Dendritic cell treated with granulocyte-macrophage colony-stimulating factor and Interleukin-4, amounts not matched to agents 40 ng/mL and 50 ng/mL, for 4 days (primary cell): ENCODE measurements at regions of chr12 and their contacts with region 1.

Region 1: DNA sequence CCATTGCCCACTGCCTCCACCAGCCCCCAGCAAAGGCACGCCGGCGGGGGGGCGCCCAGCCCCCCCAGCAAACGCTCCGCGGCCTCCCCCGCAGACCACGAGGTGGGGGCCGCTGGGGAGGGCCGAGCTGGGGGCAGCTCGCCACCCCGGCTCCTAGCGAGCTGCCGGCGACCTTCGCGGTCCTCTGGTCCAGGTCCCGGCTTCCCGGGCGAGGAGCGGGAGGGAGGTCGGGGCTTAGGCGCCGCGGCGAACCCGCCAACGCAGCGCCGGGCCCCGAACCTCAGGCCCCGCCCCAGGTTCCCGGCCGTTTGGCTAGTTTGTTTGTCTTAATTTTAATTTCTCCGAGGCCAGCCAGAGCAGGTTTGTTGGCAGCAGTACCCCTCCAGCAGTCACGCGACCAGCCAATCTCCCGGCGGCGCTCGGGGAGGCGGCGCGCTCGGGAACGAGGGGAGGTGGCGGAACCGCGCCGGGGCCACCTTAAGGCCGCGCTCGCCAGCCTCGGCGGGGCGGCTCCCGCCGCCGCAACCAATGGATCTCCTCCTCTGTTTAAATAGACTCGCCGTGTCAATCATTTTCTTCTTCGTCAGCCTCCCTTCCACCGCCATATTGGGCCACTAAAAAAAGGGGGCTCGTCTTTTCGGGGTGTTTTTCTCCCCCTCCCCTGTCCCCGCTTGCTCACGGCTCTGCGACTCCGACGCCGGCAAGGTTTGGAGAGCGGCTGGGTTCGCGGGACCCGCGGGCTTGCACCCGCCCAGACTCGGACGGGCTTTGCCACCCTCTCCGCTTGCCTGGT is at the start of gene CDKN1B:
- H3K4me3 Mint-ChIP-seq: peak within 1 kb of the TSS; percentile 96
- H3K27ac Mint-ChIP-seq: peak within 1 kb of the TSS; percentile 100
- H3K4me1 Mint-ChIP-seq: peaks cover 46% of the 10 kb centered on the region
- H3K27me3 Mint-ChIP-seq: no peaks in the 10 kb centered on the region

Region 2: DNA sequence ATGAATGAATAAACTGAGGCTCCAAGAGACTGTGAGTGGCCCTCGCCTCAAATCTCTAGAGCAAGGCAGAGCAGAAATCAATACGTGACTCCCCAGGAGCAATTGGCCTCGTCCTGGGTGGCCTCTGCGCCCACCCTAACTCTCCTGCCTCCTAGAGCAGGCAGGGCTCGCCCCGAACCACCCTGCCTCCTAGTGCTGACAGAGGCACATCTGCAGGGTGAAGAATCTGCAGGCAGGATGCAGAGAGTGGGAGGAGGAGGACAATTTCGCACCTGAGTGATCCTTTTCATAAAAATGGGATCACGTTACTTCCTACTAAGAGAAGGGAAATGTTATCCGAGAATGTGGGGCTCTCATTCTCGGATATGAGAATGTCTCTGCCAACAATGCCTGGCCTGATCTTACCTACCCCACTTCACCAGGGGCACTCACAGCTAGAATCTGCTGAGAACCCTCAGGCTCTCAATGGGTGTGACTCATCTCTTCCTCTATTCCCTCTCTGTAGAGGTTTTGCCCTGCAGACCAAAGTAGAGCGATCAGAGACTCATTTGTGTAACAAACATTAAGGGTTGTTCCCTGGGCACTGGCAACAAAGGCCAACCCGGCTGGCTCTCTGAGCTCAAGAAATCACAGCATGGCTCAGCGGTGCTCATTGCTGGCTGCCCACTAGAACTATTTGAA is 707.9 kb before region 1 on chr12:
- intact Hi-C with region 1: loop called (anchors 10 kb)
- H3K4me3 Mint-ChIP-seq: peak overlapping the region; percentile 11
- H3K27ac Mint-ChIP-seq: peak overlapping the region; percentile 95
- H3K4me1 Mint-ChIP-seq: peaks cover 53% of the 10 kb centered on the region
- H3K27me3 Mint-ChIP-seq: peaks cover 6% of the 10 kb centered on the region

Region 3: DNA sequence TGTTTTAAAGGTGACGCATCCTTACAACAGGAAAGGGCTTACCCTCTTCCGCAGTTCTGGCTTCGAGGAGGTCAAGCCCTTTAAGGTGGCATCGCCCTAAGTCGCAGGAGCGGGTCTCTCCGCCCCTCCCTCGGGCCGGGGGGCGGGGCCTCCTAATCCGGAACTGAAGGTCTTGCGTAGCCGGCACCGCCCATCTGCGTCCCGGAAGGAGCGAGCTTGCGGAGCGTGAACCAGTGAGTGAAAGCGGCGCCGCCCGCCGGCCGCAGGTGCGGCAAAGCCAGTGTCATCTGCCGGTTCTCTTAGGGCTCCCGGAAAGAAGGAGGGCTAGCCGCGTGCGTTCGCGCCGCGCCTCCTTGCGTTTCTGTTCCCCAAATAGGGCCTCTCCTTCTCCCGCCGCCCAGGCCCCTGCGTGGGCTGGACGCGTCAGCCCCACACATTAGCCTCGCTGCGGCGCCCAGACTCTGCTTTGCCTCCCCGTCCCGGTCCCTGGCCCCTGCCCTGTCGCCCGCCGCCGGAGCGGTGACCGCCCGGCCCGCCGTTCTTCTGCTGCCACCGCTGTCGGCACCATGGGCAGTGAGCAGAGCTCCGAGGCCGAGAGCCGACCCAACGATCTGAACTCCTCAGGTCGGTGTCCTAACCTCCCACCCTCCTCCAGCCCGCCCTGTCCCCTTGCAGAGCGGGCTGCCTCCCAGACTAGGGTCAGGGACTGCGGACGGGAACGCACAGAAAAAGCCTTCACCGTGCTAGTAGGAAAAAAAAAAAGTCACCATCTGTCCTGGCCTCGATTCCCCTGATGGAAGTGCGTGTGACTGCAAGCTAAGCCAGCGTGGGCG is 359.9 kb before region 1 on chr12 and contains the start of gene BORCS5:
- intact Hi-C with region 1: loop called (anchors 2 kb)
- H3K4me3 Mint-ChIP-seq: peak within 1 kb of the TSS; percentile 86
- H3K27ac Mint-ChIP-seq: peak within 1 kb of the TSS; percentile 99
- H3K4me1 Mint-ChIP-seq: peaks cover 22% of the 10 kb centered on the region
- H3K27me3 Mint-ChIP-seq: no peaks in the 10 kb centered on the region

Region 4: DNA sequence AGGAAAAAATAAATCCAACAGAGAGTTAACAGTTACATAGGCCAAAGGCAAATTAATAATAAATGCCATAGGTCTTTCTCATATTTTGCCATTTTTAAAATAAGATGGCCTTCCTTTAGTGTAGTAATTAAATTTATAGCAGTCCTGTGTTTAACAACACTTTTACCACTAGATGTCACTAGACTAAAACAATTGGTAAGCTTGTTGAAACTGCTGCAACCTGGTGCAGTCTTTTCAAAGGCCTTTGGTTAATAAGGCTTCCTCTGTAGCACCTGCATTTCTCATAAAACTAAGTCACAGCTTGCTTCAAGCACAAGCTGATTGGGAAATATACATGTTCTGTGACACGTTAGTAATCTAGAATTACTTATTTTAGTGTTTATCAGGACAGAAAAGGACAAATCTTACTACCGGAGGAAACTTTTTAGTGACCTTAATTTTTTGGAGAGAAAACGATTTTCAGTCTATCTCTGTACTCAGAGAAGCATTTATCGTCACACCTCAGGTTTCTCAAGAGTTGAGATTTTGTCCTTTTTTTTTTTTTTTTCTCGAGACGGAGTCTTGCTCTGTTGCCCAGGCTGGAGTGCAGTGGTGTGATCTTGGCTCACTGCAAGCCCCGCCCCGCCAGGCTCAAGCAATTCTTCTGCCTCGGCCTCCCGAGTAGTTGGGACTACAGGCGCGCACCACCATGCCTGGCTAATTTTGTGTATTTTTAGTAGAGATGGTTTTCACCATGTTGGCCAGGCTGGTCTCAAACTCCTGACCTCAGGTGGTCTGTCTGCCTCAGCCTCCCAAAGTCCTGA is 340.1 kb before region 1 on chr12:
- intact Hi-C with region 1: loop called (anchors 5 kb)
- H3K4me3 Mint-ChIP-seq: no peak overlapping the region
- H3K27ac Mint-ChIP-seq: no peak overlapping the region
- H3K4me1 Mint-ChIP-seq: peaks cover 36% of the 10 kb centered on the region
- H3K27me3 Mint-ChIP-seq: no peaks in the 10 kb centered on the region

Region 5: DNA sequence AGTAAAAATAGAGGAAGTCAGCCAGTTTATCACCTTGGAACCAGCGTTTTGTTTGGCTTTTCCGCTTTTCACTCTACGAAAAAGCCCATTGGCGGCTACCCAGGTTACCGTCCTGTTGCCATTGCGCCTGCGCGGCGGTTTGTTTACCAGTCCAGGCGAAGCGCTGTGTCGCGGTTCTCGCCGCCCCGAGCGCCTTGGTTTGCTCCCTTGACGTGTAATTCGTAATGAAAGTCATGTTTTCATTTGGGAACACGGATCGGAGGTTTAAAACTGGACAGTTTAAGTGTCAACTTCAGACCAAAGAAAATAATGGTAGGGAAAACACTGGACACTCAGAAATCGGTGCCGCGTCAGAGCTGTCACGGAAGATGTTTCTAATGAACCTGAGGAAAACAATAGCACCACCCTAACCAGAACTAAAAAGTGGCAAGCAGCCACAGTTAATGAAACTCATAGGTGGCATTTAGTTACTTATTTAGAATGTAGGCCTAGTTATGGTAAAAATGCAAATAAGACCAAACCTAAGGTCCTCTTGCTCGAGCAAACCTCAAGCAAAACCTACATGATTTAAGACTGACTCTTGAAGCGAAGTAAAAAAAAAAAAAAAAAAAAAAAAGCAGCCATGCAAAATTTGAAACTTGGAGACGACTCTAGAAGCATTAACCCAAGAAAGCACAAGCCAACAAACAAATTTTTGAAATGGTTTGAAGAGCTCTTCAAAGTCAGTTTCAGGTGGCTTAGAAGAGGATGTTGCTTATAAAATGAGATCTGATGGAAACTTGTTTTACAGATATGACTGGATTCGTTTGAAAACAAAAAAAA is 20.2 kb before region 1 on chr12:
- intact Hi-C with region 1: loop called (anchors 2 kb)
- H3K4me3 Mint-ChIP-seq: peak overlapping the region; percentile 76
- H3K27ac Mint-ChIP-seq: peak overlapping the region; percentile 94
- H3K4me1 Mint-ChIP-seq: peaks cover 33% of the 10 kb centered on the region
- H3K27me3 Mint-ChIP-seq: peaks cover 3% of the 10 kb centered on the region